ENCODE measurements at regions of chr9 and their contacts with region 1.

Region 1: DNA sequence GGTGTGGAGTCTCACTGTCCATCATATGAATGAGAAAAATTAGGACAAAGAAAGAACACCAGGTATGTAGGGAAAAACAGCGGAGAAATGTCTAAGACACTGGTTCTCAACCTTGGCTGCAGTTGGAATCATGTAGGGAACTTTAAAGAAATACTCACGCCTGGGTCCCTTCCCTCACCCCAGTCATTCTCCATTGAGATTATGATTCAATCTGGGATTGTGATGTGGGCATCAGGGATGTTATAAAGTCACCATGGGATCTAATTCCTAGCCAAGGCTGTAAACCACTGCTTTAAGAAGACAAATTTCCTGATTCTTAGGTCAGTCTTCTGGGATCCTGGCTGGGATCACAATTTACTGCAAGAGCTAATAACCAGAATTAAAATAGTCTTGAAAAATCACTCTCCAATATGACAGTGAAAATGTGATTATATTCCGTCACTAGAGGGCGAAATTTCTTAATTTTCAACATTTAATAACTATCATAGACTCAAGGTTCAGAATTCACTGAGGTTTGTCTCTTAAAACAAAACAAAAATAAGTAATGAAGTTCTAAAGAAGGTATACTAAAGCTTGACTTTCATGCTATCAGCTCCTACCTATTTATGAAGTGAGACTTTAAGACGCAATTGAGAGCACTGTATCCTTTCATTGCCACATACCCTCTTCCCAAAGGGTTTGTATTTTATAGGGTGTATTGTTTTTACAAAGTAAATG is 60.5 kb downstream of the GLDC start:
- DNase-seq: peak; percentile 23
- ATAC-seq: peak; percentile 70
- H3K4me3 ChIP-seq: no peak overlapping the region
- H3K27ac ChIP-seq: no peak overlapping the region
- H3K4me1 ChIP-seq: peaks cover under 1 to 3% of the 10 kb centered on the region in 2 experiments
- H3K27me3 ChIP-seq: no peaks in the 10 kb centered on the region
- CTCF ChIP-seq: peak; percentile 16 to 69 (median 61); a peak in 4 of 6 replicates
- POLR2A ChIP-seq: no peak
- RAD21 ChIP-seq: peak; percentile 69

Region 2: GRCh38 chr9:6538666-6539071 is 46.4 kb before region 1 on chr9:
- CTCF ChIA-PET with region 1: no interaction called
- POLR2A ChIA-PET with region 1: no interaction called
- RAD21 ChIA-PET with region 1: no interaction called
- intact Hi-C with region 1: no loop called
- DNase-seq: no peak
- ATAC-seq: no peak
- H3K4me3 ChIP-seq: no peak overlapping the region
- H3K27ac ChIP-seq: no peak overlapping the region
- H3K4me1 ChIP-seq: no peaks in the 10 kb centered on the region
- H3K27me3 ChIP-seq: no peaks in the 10 kb centered on the region
- CTCF ChIP-seq: no peak
- POLR2A ChIP-seq: no peak
- RAD21 ChIP-seq: no peak

Region 3: DNA sequence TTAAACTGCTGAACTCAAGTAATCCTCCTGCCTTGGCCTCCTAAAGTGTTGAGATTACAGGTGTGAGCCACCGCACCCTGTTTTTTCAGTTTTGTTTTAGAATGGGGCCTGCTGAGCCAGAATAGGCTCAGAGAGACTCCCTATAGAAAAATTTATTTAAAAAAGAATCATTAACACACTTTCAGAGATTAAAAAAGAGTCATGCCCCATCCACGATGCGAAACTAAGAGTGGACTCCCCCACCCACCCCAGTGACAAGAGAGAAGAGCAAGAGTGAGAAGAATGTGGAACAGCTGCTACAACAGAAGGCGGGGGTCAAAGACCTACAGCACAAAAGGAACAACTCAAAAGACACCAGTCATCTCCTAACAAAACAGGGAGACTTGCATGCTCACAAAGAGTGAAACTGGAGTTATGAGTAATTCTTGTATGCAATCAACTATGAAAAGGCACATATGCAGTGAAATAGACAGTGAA is 13.2 kb after region 1 on chr9:
- CTCF ChIA-PET with region 1: no interaction called
- POLR2A ChIA-PET with region 1: no interaction called
- RAD21 ChIA-PET with region 1: no interaction called
- intact Hi-C with region 1: no loop called
- DNase-seq: no peak
- ATAC-seq: no peak
- H3K4me3 ChIP-seq: no peak overlapping the region
- H3K27ac ChIP-seq: no peak overlapping the region
- H3K4me1 ChIP-seq: no peaks in the 10 kb centered on the region
- H3K27me3 ChIP-seq: no peaks in the 10 kb centered on the region
- CTCF ChIP-seq: no peak
- POLR2A ChIP-seq: no peak
- RAD21 ChIP-seq: no peak

Region 4: DNA sequence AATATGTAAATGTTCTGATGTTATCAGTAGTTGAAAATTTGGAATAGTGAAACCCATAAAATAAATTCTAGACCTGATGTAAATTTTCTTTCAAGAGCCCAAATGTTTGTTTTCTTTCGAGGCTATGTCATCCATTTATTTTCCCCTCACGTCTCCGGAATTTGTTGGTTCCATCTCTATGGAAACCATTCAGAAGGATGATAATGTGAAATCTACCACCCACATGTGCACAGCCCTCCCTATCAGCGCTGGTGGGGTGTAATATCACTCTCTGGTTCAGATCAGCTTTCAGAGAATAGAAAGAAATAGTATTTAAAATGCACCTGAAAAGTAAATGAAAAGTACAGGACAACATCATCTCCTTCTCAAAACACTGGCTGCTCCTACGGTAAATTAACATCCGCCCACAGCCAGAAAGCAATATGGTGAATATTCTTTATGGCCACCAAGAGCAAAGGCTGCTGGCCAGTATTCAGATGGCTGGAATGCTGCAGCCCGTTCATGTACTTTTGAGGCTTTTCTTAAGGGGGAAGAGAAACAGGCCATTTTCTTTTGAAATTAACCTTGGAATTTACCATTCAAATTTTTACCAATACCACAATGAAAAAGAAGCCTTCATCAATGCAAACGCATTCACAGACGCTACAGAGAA is 32.0 kb after region 1 on chr9:
- CTCF ChIA-PET with region 1: no interaction called
- POLR2A ChIA-PET with region 1: no interaction called
- RAD21 ChIA-PET with region 1: no interaction called
- intact Hi-C with region 1: no loop called
- DNase-seq: no peak
- ATAC-seq: no peak
- H3K4me3 ChIP-seq: no peak overlapping the region
- H3K27ac ChIP-seq: no peak overlapping the region
- H3K4me1 ChIP-seq: no peaks in the 10 kb centered on the region
- H3K27me3 ChIP-seq: no peaks in the 10 kb centered on the region
- CTCF ChIP-seq: no peak
- POLR2A ChIP-seq: no peak
- RAD21 ChIP-seq: no peak

Region 5: GRCh38 chr9:6667633-6668280 is 82.7 kb after region 1 on chr9:
- CTCF ChIA-PET with region 1: interaction called, 5 read pairs
- POLR2A ChIA-PET with region 1: no interaction called
- RAD21 ChIA-PET with region 1: interaction called in 1 of 2 experiments, 3 read pairs
- intact Hi-C with region 1: loop called (anchors 5 kb)
- DNase-seq: no peak
- ATAC-seq: peak; percentile 82
- H3K4me3 ChIP-seq: no peak overlapping the region
- H3K27ac ChIP-seq: no peak overlapping the region
- H3K4me1 ChIP-seq: peaks cover 0 to 9% of the 10 kb centered on the region in 2 experiments; a peak in 1 of 4 replicates
- H3K27me3 ChIP-seq: no peaks in the 10 kb centered on the region
- CTCF ChIP-seq: peak; percentile 57 to 72 (median 63); a peak in 5 of 6 replicates
- POLR2A ChIP-seq: no peak
- RAD21 ChIP-seq: peak; percentile 62

Region 6: GRCh38 chr9:6739218-6739617 is 154.2 kb after region 1 on chr9:
- CTCF ChIA-PET with region 1: interaction called, 13 read pairs
- POLR2A ChIA-PET with region 1: no interaction called
- RAD21 ChIA-PET with region 1: no interaction called
- intact Hi-C with region 1: loop called (anchors 2 kb)
- DNase-seq: peak; percentile 38
- ATAC-seq: peak; percentile 95
- H3K4me3 ChIP-seq: no peak overlapping the region
- H3K27ac ChIP-seq: no peak overlapping the region
- H3K4me1 ChIP-seq: no peaks in the 10 kb centered on the region
- H3K27me3 ChIP-seq: no peaks in the 10 kb centered on the region
- CTCF ChIP-seq: peak; percentile 37 to 57 (median 55); a peak in 5 of 6 replicates
- POLR2A ChIP-seq: no peak
- RAD21 ChIP-seq: peak; percentile 75